Prostate gland (tissue), 2 donors: ENCODE measurements at regions of chr7 and their contacts with region 1.

Region 1: GRCh38 chr7:106176414-106177299 is 64.5 kb upstream of the SYPL1 start:
- DNase-seq: peak; percentile 80
- H3K4me3 ChIP-seq: no peak overlapping the region
- H3K27ac ChIP-seq: peak overlapping the region in 1 of 2 donors; percentile 14
- H3K4me1 ChIP-seq: peaks cover 19% of the 10 kb centered on the region
- H3K27me3 ChIP-seq: no peaks in the 10 kb centered on the region
- CTCF ChIP-seq: peak; percentile 84 to 96 (median 93)
- POLR2A ChIP-seq: no peak

Region 2: GRCh38 chr7:106313966-106314365 is 137.3 kb after region 1 on chr7:
- intact Hi-C with region 1: no loop called
- DNase-seq: no peak
- H3K4me3 ChIP-seq: no peak overlapping the region
- H3K27ac ChIP-seq: peak overlapping the region; percentile 41 to 81
- H3K4me1 ChIP-seq: peaks cover 4% of the 10 kb centered on the region
- H3K27me3 ChIP-seq: no peaks in the 10 kb centered on the region
- CTCF ChIP-seq: no peak
- POLR2A ChIP-seq: no peak

Region 3: GRCh38 chr7:106461993-106462859 is 285.6 kb after region 1 on chr7:
- intact Hi-C with region 1: loop called (anchors 1 kb)
- DNase-seq: no peak
- H3K4me3 ChIP-seq: no peak overlapping the region
- H3K27ac ChIP-seq: no peak overlapping the region
- H3K4me1 ChIP-seq: no peaks in the 10 kb centered on the region
- H3K27me3 ChIP-seq: no peaks in the 10 kb centered on the region
- CTCF ChIP-seq: peak; percentile 39 to 87 (median 76)
- POLR2A ChIP-seq: no peak

Region 4: DNA sequence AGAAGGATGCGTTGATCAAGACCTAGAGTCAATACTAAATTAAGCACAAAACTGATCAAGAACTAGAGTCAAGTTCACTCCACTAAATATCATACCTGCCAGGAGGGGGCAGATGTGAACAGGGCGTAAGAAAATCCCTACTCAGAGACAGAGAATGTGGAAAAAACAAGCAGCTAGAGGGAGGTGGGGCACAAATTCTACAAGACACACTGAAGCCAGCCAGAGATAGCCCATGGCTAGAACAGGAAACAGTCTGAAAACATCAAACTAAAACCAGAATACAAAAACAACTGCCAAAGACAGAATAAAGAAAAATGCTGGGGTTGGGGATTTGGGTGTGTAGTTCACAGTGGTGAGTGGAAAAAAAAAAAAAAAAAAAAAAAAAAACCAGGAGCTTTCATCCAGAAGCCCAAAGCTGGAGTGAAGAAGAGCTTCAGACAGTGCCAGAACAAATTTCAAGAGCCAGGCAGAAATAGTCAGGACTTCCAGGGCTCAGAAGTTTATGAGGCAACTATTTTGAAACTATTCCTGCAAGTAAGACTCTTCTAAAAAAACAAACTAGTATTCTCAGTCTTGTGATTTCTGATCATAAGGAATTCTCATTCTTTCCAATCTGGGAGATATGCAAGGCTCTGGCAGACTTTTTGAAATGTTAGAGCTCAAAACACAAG is 366.0 kb after region 1 on chr7:
- intact Hi-C with region 1: loop called (anchors 10 kb)
- DNase-seq: peak; percentile 31
- H3K4me3 ChIP-seq: no peak overlapping the region
- H3K27ac ChIP-seq: peak overlapping the region; percentile 24 to 25
- H3K4me1 ChIP-seq: no peaks in the 10 kb centered on the region
- H3K27me3 ChIP-seq: no peaks in the 10 kb centered on the region
- CTCF ChIP-seq: peak; percentile 13 to 69 (median 58)
- POLR2A ChIP-seq: no peak

Region 5: DNA sequence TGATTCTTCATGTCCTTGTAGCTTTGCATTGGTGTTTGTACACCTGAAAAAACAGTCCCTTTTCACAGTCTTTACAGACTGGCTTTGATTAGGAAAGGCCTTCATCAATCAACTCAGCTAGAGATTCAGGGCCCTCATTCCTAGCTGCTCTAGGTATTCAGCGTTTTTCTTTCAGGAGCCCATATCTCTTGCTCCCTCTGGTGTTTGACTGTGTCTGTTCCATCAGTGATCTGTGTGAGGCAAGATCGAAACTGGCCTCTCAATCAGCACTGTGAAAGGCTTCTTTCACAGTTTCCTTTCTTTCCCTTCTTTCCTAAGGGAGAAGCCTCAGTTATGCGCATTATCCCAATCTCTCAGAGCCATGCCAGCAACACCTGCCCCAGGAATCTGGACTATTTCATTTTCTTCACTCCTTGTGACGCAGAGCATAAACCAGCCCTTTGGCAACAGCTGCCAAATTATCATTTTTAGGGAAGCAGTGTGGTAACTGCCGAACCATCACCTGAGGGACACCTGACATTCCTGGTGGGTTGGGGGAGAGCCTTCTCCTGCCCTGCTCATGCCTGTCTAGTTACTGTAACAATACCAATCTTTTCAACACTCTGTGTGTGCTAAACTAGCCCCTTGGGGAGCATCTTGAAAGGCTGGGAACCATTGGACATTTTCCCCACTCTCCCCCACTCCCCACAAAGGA is 560.0 kb after region 1 on chr7:
- intact Hi-C with region 1: loop called (anchors 2 kb)
- DNase-seq: peak; percentile 23
- H3K4me3 ChIP-seq: no peak overlapping the region
- H3K27ac ChIP-seq: no peak overlapping the region
- H3K4me1 ChIP-seq: no peaks in the 10 kb centered on the region
- H3K27me3 ChIP-seq: no peaks in the 10 kb centered on the region
- CTCF ChIP-seq: peak in 3 of 4 experiments; percentile 53 to 74 (median 64)
- POLR2A ChIP-seq: no peak